Dorsolateral prefrontal cortex (tissue), 120 donors: ENCODE measurements at regions of chr3 and their contacts with region 1.

Region 1: DNA sequence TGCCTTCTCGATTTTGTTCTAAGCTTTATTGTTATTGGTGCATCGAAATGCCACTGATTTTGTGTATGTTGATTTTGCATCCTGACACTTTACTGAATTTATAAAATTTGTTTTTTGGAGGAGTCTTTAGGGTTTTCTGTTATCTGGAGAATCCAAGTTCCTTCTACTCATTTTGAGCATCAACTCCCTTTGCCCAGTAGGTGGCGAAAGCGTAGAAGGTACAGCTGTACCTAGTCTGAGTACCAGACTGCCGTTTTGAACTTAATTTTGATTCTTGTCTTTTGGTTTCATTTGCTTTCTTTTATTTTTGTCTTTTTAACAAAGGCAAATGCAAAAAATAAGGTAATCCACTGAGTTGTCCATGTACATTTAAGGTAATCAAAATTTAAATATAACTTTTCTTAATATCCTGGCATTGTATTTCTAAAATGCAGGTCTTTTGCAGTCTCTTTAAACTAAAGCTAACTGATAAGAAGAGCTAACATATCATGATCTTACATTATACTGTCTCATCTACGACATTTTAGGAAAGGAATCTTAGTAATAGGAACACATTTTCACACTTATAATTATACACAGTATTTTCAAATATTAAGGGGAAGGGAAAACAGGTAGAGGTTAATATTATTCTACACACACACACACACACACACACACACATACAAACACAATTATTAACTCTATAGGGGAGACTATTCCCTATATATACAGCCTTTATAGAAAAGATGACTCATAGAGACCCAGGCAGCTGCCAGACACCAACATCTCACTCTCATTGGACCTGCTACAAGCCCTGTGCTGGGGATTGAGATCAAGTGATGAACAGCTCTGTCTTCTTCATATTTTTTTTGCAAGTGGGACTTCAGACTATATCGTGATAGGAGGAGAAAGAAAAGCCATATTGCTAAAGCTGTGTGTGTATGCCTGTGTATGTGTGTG is 71.7 kb downstream of the SYNPR start:
- DNase-seq: peak in 8 of 10 donors; percentile 28 to 71 (median 48)
- H3K4me3 ChIP-seq: no peak overlapping the region
- H3K27ac ChIP-seq: no peak overlapping the region
- H3K27me3 ChIP-seq: peaks cover 0 to 7% (median 0%) of the 10 kb centered on the region in 45 donors
- CTCF ChIP-seq: peak; percentile 49 to 88 (median 78)

Region 2: DNA sequence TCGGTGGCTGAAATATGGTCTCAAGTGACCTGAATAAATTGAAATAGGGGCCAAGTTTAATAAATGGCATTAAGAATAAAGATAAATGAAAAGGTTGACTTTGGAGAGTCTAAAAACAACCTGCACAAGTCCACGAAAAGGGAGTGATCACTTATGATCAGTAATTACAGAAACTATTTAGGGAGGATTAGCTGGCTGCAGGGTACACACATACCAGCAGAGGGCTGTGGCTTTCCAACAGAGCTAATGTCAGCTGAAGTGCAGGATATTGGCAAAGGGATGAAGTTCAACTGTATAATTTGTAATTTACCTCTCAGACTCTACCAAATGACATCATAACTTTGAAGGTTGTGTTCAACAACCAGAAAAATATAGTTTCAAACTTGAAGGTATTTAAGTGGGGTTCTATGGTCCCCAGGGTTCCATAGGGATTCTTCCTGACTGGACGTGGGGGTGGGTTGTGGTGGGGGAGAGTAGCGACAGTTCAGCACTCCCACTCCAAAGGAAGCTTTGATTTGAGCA is 15.1 kb after region 1 on chr3:
- intact Hi-C with region 1: no loop called
- DNase-seq: no peak
- H3K4me3 ChIP-seq: no peak overlapping the region
- H3K27ac ChIP-seq: no peak overlapping the region
- H3K27me3 ChIP-seq: no peaks in the 10 kb centered on the region
- CTCF ChIP-seq: peak in 41 of 56 donors; percentile 10 to 49 (median 28)

Region 3: DNA sequence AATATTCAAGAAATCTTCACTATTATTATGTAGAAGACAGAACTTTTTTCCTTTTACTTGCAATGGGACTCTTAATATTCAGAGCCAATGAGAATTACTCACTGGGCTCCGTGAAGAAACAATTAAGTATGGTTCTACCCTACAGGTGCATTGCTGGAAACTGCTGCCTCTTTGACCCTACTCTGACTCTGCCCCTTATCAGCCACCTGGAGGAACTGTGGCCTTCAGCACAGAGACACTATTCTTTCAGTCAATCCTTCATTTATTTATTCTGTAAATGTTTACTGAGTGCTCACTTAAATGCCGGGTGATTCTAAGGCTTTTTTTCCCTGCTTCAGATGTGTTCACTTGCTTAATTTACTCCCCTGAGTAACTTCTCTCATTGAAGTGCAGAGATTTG is 91.4 kb after region 1 on chr3:
- intact Hi-C with region 1: no loop called
- DNase-seq: no peak
- H3K4me3 ChIP-seq: no peak overlapping the region
- H3K27ac ChIP-seq: no peak overlapping the region
- H3K27me3 ChIP-seq: peaks cover 0 to 16% (median 0%) of the 10 kb centered on the region in 45 donors
- CTCF ChIP-seq: no peak

Region 4: DNA sequence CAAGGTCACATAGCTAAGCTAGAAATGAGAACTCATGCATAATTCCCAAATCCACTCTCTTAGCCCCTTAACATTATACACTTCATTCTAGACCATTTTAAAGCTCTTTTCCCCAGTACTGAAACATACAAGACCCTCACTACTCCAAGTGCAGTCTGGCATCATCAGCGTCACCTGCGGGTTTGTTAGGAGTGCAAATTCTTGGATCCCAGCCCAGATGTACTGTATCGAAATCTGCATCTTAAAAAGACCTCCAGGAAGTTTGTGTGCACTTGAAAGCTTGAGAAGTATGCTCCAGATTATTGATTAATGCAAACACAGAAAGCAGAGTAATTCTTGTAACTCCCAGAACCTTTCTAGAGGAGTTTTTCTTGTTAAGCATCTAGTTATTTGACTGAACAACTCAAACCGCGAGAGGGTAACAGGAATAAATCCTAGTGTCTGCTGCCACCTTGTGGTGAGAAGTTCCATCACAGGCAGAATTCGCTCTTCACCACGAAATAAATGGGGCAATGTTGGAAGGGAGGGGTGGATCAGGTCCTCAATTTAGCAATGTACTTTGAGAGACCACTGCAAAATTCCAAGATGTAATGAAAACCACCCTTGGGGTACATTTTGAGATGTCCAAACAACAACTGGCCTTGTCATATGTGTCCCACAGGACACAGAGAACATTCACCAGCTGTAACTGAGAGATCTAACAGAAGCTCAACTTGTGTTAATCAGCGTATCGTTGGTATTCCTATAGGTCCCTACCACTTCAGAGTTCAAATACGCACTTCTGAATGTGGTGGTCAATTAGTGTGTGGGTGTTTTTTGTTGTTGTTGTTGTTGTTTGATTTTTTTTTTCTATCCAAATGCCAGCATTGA is 468.7 kb after region 1 on chr3:
- intact Hi-C with region 1: loop called (anchors 2 kb)
- DNase-seq: peak in 9 of 10 donors; percentile 31 to 74 (median 63)
- H3K4me3 ChIP-seq: no peak overlapping the region
- H3K27ac ChIP-seq: no peak overlapping the region
- H3K27me3 ChIP-seq: no peaks in the 10 kb centered on the region
- CTCF ChIP-seq: peak; percentile 85 to 98 (median 94)

Region 5: GRCh38 chr3:63993653-63994079 is 643.8 kb after region 1 on chr3:
- intact Hi-C with region 1: loop called in 1 of 2 experiments (anchors 5 kb)
- DNase-seq: peak; percentile 48 to 79 (median 66)
- H3K4me3 ChIP-seq: no peak overlapping the region
- H3K27ac ChIP-seq: peak overlapping the region in 8 of 59 donors; percentile 12 to 61 (median 36)
- H3K27me3 ChIP-seq: no peaks in the 10 kb centered on the region
- CTCF ChIP-seq: peak; percentile 70 to 98 (median 94)